Naive thymus-derived CD4-positive, alpha-beta T cell (primary cell): ENCODE measurements at regions of chr22 and their contacts with region 1.

Region 1: GRCh38 chr22:23281406-23282088 is 101.2 kb downstream of the BCR start:
- DNase-seq: peak; percentile 57 to 80 (median 73)
- ATAC-seq: peak; percentile 86
- H3K4me3 ChIP-seq: no peak overlapping the region
- H3K4me3 Mint-ChIP-seq: no peak overlapping the region
- H3K27ac ChIP-seq: no peak overlapping the region
- H3K27ac Mint-ChIP-seq: no peak overlapping the region
- H3K4me1 ChIP-seq: peaks cover 7 to 27% of the 10 kb centered on the region in 2 donors
- H3K4me1 Mint-ChIP-seq: peaks cover 0 to 29% (median 9%) of the 10 kb centered on the region in 7 donors
- H3K27me3 ChIP-seq: no peaks in the 10 kb centered on the region
- H3K27me3 Mint-ChIP-seq: no peaks in the 10 kb centered on the region

Region 2: DNA sequence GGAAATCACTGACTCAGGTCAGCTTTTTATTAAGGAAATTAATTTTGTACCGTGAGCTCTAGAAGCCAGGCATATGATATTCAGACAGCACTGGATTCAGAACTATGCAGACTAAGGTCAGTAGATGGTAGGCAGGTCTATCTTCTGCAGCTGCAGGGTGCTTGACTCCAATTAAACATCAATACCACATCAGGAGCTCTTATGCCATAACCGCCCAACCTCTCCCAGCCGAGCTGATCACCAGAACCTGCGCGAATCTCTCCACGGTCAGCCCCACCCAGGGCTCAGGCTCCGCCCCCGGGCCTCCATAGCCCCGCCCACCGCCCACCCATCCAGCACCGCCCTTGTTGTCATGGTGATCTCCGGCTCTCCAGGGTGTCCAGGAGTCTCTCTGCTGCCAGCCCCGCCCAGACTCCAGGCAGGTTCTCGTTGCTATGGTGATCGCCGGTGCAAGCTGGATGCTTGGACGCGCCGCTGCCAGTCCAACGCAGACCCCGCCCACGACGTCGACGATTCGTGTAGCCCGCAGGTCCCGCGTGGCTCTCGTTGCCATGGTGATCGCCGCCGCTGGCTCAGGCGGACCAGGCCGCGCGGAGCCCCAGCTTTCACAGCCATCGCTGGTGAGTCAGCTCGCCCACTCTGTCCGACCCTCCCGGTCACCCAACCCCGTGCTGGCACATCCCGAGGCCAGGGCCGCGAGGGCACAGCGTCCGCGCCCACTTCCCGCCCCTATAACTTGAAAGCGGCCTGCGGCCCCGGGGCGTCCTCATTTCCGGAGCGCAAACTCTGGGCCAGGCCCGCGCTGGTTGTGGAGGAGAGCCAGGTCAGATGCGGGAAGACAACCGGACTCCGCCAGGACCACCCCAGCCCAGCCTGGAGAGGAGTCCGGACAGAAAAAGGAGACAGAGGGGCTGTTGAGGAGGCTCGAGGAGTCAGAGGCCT is 136.3 kb before region 1 on chr22 and contains the start of gene RAB36:
- CTCF ChIA-PET with region 1: interaction called, 5 read pairs
- POLR2A ChIA-PET with region 1: interaction called, 3 read pairs
- intact Hi-C with region 1: loop called in 1 of 2 experiments (anchors 1 kb)
- DNase-seq: peak; percentile 77 to 93 (median 81)
- ATAC-seq: peak; percentile 78
- H3K4me3 ChIP-seq: peak within 1 kb of the TSS; percentile 25
- H3K4me3 Mint-ChIP-seq: peak within 1 kb of the TSS; percentile 72 to 84 (median 82)
- H3K27ac ChIP-seq: peak within 1 kb of the TSS; percentile 78
- H3K27ac Mint-ChIP-seq: peak within 1 kb of the TSS; percentile 79 to 96 (median 93)
- H3K4me1 ChIP-seq: peaks cover 38 to 45% of the 10 kb centered on the region in 2 donors
- H3K4me1 Mint-ChIP-seq: peaks cover 27 to 60% (median 49%) of the 10 kb centered on the region in 7 donors
- H3K27me3 ChIP-seq: no peaks in the 10 kb centered on the region
- H3K27me3 Mint-ChIP-seq: peaks cover 0 to 20% (median 0%) of the 10 kb centered on the region in 5 donors
- total RNA-seq, gene RAB36: 0.10 to 1.2 (median 0.38) TPM